Activated T-helper 1 cell treated with anti-CD3 and anti-CD28 coated beads, Interleukin-12 subunit alpha, Interleukin-12 subunit beta, Interleukin-2, Interleukin-4 antibody, amounts not matched to agents 30 ng/mL and 10 ng/mL and 1 ng/mL, durations not matched to agents 14 hours and 24 hours and 36 hours (primary cell): ENCODE measurements at regions of chr13 and their contacts with region 1.

Region 1: DNA sequence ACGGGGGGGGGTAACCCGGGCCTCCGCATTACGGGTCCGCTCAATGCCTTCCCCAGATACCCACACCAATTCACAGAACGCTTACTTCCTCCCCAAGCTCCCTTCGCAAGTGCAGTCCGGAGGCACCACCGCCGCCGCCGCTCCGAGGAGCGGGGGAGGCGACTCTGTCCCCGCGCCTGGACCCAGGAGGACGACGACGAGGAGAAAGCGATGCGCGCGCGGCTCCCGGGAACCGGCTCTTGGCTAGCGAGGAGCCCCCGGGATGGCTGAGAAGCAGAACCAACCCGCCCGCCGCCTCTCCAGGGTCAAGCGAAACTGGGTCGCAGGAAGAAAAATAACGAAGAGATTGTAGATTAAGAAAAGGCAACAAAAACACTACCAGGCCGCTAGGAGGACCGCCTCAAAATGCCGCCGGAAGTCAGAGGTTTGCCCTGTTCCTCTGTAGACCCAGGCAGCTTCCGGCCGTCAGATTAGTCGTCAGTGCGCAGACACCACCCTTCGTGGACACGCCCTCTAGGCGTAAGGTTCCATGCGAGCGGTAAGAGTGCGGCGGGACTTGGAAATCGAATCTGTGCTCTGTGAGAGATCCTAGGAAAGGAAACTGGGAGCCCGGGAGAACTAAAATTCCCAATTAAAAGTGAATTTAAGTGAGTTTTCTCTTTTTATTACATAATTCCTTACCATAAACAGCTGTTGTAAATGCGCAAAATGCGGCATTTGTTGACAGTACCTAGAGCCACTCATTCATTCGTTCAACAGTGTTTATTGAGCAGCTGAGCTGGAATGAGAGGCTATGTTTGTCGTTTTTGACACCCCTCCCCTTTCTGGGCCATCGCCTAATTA is at the start of gene ZC3H13:
- DNase-seq: peak; percentile 89
- H3K4me3 Mint-ChIP-seq: peak within 1 kb of the TSS; percentile 93
- H3K27ac Mint-ChIP-seq: peak within 1 kb of the TSS; percentile 94
- H3K4me1 Mint-ChIP-seq: peaks cover 40% of the 10 kb centered on the region
- H3K27me3 Mint-ChIP-seq: peaks cover 15% of the 10 kb centered on the region
- total RNA-seq, gene ZC3H13: 52.0 and 59.4 TPM in 2 replicates

Region 2: DNA sequence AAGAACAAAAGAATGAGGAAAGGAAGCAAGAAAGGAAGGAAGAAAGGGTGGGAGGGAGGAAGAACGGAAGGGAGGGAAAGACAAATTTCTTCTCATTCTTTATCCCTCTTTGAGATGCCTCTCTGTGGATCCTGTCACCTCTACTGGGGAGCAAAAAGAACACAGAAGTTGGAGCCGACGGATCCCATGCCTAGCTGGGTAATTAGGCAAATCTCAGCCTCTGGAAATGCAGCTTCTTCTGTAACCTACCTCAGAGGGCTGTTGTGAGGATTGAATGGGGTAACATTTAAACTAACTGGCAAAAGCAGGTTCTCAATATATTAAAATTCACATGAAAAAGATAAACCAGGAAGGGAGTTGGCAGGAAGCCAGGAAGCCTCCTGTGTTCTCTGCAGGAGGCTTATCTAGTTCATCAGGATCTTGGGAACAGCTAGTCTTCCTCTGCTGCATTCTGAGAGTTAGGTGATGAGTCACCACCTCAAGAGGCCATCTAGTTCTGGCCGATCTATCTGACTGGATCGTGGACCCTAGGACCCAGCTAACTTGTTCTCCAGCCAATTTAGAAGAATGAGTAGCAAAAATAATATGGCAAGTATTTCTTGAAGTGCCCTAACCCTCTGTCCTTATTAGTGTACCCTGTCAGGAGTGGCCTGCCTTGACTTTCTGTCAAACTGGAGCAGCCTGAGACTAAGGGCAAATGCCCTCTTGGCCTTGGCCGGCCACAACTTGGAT is 67.5 kb after region 1 on chr13:
- intact Hi-C with region 1: loop called (anchors 5 kb)
- DNase-seq: no peak
- H3K4me3 Mint-ChIP-seq: no peak overlapping the region
- H3K27ac Mint-ChIP-seq: no peak overlapping the region
- H3K4me1 Mint-ChIP-seq: peaks cover 7% of the 10 kb centered on the region
- H3K27me3 Mint-ChIP-seq: peaks cover 21% of the 10 kb centered on the region

Region 3: GRCh38 chr13:46168341-46168740 is 115.8 kb after region 1 on chr13:
- intact Hi-C with region 1: loop called (anchors 2 kb)
- DNase-seq: no peak
- H3K4me3 Mint-ChIP-seq: peak overlapping the region; percentile 79
- H3K27ac Mint-ChIP-seq: peak overlapping the region; percentile 89
- H3K4me1 Mint-ChIP-seq: peaks cover 92% of the 10 kb centered on the region
- H3K27me3 Mint-ChIP-seq: no peaks in the 10 kb centered on the region

Region 4: GRCh38 chr13:46184277-46184699 is 131.7 kb after region 1 on chr13:
- intact Hi-C with region 1: loop called (anchors 1 kb)
- DNase-seq: peak; percentile 64
- H3K4me3 Mint-ChIP-seq: peak overlapping the region; percentile 97
- H3K27ac Mint-ChIP-seq: peak overlapping the region; percentile 99
- H3K4me1 Mint-ChIP-seq: peaks cover 39% of the 10 kb centered on the region
- H3K27me3 Mint-ChIP-seq: no peaks in the 10 kb centered on the region

Region 5: GRCh38 chr13:46211483-46212351 is 159.2 kb after region 1 on chr13 and contains the start of gene LRRC63:
- intact Hi-C with region 1: loop called (anchors 1 kb)
- DNase-seq: peak; percentile 85
- H3K4me3 Mint-ChIP-seq: peak within 1 kb of the TSS; percentile 84
- H3K27ac Mint-ChIP-seq: peak within 1 kb of the TSS; percentile 87
- H3K4me1 Mint-ChIP-seq: peaks cover 26% of the 10 kb centered on the region
- H3K27me3 Mint-ChIP-seq: peaks cover 1% of the 10 kb centered on the region
- total RNA-seq, gene LRRC63: 0.13 and 0.17 TPM in 2 replicates

Region 6: DNA sequence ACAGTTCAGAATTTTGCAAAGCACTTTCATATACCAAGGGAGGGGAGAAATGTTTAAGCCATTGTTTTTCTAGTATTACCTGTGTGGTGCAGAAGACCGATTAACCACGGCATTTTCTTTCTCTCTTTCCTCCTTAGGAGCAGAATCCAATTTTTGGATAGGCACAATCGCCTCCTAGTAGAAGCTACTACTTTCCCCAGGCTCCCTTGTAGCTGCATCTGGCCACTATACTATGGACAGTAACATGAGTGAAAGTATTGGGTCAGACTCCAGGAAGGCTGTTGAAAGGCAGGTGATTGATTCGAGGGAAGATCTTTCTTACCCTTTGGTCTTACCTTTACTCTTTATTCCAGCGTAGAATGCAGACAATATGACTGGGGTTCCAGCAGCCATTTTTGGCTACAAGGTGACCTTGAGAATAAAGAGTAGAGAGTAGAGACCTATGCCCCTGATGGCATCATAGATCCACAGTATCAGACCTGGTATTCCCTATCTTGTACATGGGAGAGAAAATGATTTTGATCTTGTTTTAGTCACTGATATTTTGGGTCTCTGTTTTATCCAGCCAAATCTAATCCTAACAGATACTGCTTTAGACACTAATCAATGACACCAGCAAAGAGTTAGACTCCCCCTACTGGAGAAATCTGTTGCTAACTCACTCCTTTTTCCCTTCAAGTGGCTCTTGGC is 236.2 kb after region 1 on chr13:
- intact Hi-C with region 1: loop called (anchors 2 kb)
- DNase-seq: no peak
- H3K4me3 Mint-ChIP-seq: no peak overlapping the region
- H3K27ac Mint-ChIP-seq: no peak overlapping the region
- H3K4me1 Mint-ChIP-seq: peaks cover 26% of the 10 kb centered on the region
- H3K27me3 Mint-ChIP-seq: peaks cover 5% of the 10 kb centered on the region